MCF 10A (cell line): ENCODE measurements at regions of chr9 and their contacts with region 1.

Region 1: GRCh38 chr9:684054-684890 is 157.2 kb upstream of the DMRT1 start:
- DNase-seq: peak; percentile 70
- H3K4me3 Mint-ChIP-seq: peak overlapping the region; percentile 57
- H3K27ac Mint-ChIP-seq: peak overlapping the region; percentile 93
- H3K4me1 Mint-ChIP-seq: peaks cover 51% of the 10 kb centered on the region
- H3K27me3 Mint-ChIP-seq: no peaks in the 10 kb centered on the region
- CTCF ChIP-seq: no peak

Region 2: GRCh38 chr9:371349-371748 is 312.9 kb before region 1 on chr9:
- CTCF ChIA-PET with region 1: no interaction called
- POLR2A ChIA-PET with region 1: no interaction called
- intact Hi-C with region 1: no loop called
- DNase-seq: no peak
- H3K4me3 Mint-ChIP-seq: no peak overlapping the region
- H3K27ac Mint-ChIP-seq: no peak overlapping the region
- H3K4me1 Mint-ChIP-seq: no peaks in the 10 kb centered on the region
- H3K27me3 Mint-ChIP-seq: no peaks in the 10 kb centered on the region
- CTCF ChIP-seq: no peak

Region 3: GRCh38 chr9:700365-701282 is 16.4 kb after region 1 on chr9:
- CTCF ChIA-PET with region 1: interaction called, 10 read pairs
- POLR2A ChIA-PET with region 1: interaction called, 139 read pairs
- intact Hi-C with region 1: no loop called
- DNase-seq: no peak
- H3K4me3 Mint-ChIP-seq: no peak overlapping the region
- H3K27ac Mint-ChIP-seq: no peak overlapping the region
- H3K4me1 Mint-ChIP-seq: peaks cover 34% of the 10 kb centered on the region
- H3K27me3 Mint-ChIP-seq: no peaks in the 10 kb centered on the region
- CTCF ChIP-seq: no peak

Region 4: DNA sequence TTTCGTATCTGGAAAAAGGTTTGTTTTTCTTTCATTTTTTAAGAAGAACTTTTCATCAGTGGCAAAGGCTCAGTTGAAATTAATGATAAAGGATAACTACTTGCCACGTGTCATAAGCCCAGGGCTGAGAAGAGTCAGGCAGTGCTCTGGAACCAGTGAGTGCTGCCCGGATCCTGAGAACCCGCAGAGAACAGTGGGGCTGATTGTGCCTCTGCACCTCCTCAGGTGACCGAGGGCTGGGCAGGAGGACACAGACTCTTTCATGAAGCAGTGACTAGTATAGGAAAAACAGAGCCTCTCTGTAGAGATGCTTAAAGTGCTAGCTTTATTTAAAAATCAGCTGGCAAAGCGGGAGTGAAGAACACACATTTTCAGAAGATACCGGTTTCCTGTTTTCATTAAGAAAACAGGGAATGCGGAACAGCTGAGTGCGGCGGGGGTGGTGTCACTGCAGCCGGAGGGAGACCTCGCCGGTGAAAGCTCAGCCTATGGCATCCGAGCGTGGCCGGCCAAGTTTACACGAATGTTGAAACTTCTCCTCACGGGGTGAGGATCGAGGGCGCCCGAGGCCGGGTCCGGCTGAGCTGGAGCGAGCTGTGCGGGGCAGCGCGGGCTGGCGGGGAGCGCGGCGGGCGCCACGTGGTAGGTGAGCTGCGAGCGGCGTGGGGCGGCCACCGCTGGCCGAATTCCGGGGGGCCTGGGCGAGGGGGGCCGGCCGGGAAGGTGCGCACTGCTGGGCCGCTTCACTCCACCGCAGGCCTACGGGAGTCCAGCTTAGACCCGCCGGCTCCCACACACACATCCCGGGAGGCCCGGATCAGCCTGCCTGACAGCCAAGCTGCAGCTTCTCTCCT is 22.6 kb after region 1 on chr9:
- CTCF ChIA-PET with region 1: interaction called, 3 read pairs
- POLR2A ChIA-PET with region 1: interaction called, 35 read pairs
- intact Hi-C with region 1: no loop called
- DNase-seq: peak; percentile 75
- H3K4me3 Mint-ChIP-seq: peak overlapping the region; percentile 77
- H3K27ac Mint-ChIP-seq: peak overlapping the region; percentile 88
- H3K4me1 Mint-ChIP-seq: peaks cover 28% of the 10 kb centered on the region
- H3K27me3 Mint-ChIP-seq: no peaks in the 10 kb centered on the region
- CTCF ChIP-seq: no peak

Region 5: DNA sequence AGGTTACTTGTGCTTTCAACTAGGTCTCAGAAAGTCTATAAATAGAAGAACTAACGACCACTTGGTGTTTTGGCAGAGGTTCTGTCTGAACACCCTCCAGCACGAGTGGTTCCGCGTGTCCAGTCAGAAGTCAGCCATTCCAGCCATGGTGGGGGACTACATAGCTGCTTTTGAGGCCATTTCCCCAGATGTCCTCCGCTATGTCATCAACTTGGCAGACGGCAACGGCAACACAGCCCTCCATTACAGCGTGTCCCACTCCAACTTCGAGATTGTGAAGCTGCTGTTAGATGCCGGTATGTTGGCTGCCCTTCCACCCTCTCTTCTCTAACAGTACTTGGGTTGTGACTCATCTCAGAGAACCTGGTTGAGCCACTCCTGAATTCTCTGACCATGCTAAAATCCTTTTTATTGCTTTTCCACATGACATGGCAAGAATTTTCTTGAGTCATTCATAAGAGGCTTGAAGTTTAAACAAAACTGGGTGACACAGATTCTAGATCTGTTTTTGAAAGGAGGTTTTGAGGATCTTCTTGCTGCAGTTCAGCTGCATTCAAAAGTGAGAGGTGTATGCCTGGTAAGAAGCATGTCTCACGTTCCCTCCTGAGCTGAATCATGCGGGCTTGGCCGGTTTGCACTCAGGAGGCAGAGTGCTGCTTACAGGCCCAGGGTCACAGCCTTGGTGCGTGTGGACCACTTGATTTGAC is 54.1 kb after region 1 on chr9:
- CTCF ChIA-PET with region 1: interaction called, 3 read pairs
- POLR2A ChIA-PET with region 1: interaction called, 6 read pairs
- intact Hi-C with region 1: loop called (anchors 2 kb)
- DNase-seq: peak; percentile 83
- H3K4me3 Mint-ChIP-seq: peak overlapping the region; percentile 20
- H3K27ac Mint-ChIP-seq: peak overlapping the region; percentile 85
- H3K4me1 Mint-ChIP-seq: peaks cover 9% of the 10 kb centered on the region
- H3K27me3 Mint-ChIP-seq: no peaks in the 10 kb centered on the region
- CTCF ChIP-seq: no peak

Region 6: DNA sequence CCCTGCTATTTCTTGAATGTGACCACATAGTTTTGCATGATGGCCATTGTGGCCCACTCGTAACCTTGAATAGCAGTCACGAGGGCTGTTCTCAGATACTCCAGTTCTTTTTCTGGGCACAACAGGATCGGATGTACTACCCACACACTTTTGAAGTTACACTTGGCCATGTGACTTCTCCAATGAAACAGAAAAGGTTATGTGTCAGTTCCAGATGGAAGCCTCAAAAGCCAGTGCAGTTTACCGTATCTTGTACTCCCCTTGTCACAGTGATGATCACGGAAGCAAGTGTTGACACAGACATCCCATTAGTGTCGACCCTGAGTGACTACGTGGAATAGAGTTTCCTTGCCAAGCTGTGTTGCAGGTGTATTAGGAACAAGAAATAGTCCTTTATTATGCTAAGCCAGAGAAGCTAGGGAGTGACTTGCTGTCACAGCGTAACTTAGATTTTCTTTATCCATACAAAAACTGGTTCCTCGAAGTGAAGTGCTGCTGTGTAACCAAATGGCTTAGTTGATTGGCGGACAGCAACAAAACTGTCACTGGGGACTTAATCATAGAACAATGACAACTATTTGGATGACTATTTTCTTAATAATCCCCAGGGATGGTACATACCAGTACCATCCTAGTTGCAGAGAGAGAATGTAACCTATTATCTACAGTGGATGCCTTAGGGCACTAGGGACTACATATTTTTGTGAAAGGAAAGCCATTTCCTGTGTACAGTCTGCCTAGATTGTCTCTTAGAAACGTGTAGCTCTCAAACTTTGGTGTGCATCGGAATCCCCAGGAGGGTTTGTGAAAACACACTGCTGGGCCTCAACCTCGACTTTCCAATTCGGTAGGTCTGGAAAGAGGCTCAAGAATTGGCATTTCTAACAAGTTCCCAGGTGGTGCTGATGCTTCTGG is 67.1 kb after region 1 on chr9:
- CTCF ChIA-PET with region 1: interaction called, 3 read pairs
- POLR2A ChIA-PET with region 1: interaction called, 6 read pairs
- intact Hi-C with region 1: loop called (anchors 5 kb)
- DNase-seq: no peak
- H3K4me3 Mint-ChIP-seq: no peak overlapping the region
- H3K27ac Mint-ChIP-seq: peak overlapping the region; percentile 78
- H3K4me1 Mint-ChIP-seq: peaks cover 15% of the 10 kb centered on the region
- H3K27me3 Mint-ChIP-seq: no peaks in the 10 kb centered on the region
- CTCF ChIP-seq: no peak